Aorta (tissue), 5 donors: ENCODE measurements at regions of chr9 and their contacts with region 1.

Region 1: GRCh38 chr9:83622939-83623678 is at the start of gene IDNK:
- DNase-seq: peak; percentile 71 to 91
- ATAC-seq: peak; percentile 91
- H3K4me3 ChIP-seq: peak within 1 kb of the TSS; percentile 50 to 91
- H3K27ac ChIP-seq: peak within 1 kb of the TSS; percentile 36 to 89
- H3K4me1 ChIP-seq: peaks cover 0 to 1% of the 10 kb centered on the region in 2 donors
- H3K27me3 ChIP-seq: no peaks in the 10 kb centered on the region
- total RNA-seq, gene IDNK: 1.7 to 6.3 TPM

Region 2: DNA sequence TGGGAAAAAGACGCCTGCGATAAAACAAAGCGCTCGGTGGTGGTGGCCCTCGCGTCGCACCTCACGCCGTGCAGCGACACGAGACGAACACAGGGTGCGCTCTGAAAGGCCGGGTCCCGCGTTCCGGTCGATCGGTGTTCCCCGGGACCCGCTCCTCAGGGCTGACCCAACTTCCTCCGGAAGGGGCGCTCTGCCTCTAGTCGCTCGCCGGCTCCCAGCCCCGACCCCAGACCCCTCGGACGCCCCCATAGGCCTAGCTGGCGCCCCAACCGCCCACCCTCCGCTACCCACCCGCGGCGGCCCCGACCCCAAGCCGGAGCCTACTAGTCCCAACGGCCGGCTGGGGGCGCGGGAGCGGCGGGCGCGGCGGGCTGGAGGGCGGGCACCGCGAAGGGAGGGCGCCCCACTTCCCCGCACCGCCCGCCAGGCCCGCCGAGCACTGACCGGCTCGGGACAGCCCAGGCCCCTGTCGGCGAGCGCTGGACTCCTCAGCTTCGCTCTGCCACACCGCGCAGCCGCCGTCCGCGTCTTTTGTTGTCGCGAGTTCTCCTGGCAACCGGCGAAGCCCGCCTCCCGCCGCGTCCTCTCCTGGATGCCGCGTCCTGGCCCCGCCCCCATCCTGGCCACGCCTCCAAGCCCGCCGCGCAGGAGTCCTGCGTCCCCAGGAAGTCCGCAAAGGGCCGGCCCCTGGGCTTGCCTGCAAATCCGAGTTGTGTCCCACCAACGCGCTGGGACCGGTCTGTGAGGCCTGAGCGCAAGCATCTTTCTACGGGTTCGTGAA is 298.0 kb after region 1 on chr9 and contains the start of gene KIF27:
- intact Hi-C with region 1: loop called in 1 of 2 experiments (anchors 10 kb)
- DNase-seq: peak; percentile 100
- ATAC-seq: peak; percentile 99
- H3K4me3 ChIP-seq: peak within 1 kb of the TSS; percentile 85 to 87
- H3K27ac ChIP-seq: peak within 1 kb of the TSS; percentile 43 to 70
- H3K4me1 ChIP-seq: no peaks in the 10 kb centered on the region
- H3K27me3 ChIP-seq: no peaks in the 10 kb centered on the region
- total RNA-seq, gene KIF27: 6.8 to 8.0 TPM